ENCODE measurements at regions of chr9 and their contacts with region 1.

Region 1: GRCh38 chr9:11356067-11356466 is 743.3 kb upstream of the PTPRD start:
- H3K4me3 Mint-ChIP-seq: no peak overlapping the region
- H3K27ac Mint-ChIP-seq: no peak overlapping the region
- H3K4me1 Mint-ChIP-seq: no peaks in the 10 kb centered on the region
- H3K27me3 Mint-ChIP-seq: no peaks in the 10 kb centered on the region

Region 2: GRCh38 chr9:11702548-11702947 is 346.5 kb after region 1 on chr9:
- intact Hi-C with region 1: no loop called
- H3K4me3 Mint-ChIP-seq: no peak overlapping the region
- H3K27ac Mint-ChIP-seq: no peak overlapping the region
- H3K4me1 Mint-ChIP-seq: no peaks in the 10 kb centered on the region
- H3K27me3 Mint-ChIP-seq: no peaks in the 10 kb centered on the region

Region 3: DNA sequence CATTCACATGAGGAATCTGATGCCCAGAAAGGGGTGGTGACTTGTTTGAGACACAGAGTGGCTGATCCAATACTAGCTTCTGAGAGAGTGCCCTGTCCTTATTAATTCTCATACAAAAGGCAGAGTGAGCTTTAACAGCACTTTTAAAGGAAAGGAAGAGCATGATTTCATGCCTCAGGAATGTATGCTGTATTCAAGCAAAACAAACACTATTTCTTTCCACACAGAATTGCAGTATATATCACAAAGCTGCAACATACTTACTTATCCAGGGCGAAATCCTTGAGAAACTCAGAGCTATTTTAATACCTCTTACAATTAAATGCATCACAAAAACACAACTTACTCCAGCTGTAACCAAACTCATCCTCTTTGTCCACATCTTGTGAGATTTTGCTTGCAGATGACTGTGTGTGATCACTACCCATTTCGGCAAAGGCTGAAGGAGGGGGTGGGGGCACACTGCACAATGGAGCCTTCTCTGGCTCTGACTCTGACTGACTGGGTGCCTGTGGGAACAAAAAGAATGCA is 1783.6 kb after region 1 on chr9:
- intact Hi-C with region 1: loop called (anchors 10 kb)
- H3K4me3 Mint-ChIP-seq: no peak overlapping the region
- H3K27ac Mint-ChIP-seq: no peak overlapping the region
- H3K4me1 Mint-ChIP-seq: no peaks in the 10 kb centered on the region
- H3K27me3 Mint-ChIP-seq: no peaks in the 10 kb centered on the region